Activated naive CD4-positive, alpha-beta T cell treated with anti-CD3 and anti-CD28 coated beads for 36 hours (primary cell): ENCODE measurements at regions of chr12 and their contacts with region 1.

Region 1: DNA sequence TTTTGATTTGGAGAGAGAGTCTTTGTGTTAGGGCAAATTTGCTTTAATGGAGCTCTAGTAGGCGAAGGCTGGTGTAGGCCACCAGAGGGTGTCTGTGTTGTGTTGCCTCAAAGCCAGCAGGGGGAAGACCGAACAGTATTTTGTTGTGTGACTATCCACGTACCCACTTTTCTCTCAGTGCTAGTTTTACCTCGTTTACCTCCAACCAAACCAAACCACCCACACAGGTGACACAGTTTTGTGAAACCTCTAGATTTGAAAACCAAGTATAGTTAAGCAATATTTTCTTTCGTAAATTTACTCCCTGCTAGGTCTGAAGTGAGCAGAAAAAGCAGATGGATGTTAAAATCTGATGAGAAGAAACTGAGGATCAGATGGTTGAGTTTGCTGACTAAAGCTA is 36.3 kb upstream of the NPFF start:
- DNase-seq: peak; percentile 77
- H3K4me3 Mint-ChIP-seq: no peak overlapping the region
- H3K27ac Mint-ChIP-seq: peak overlapping the region; percentile 26
- H3K4me1 Mint-ChIP-seq: peaks cover 13% of the 10 kb centered on the region
- H3K27me3 Mint-ChIP-seq: no peaks in the 10 kb centered on the region

Region 2: DNA sequence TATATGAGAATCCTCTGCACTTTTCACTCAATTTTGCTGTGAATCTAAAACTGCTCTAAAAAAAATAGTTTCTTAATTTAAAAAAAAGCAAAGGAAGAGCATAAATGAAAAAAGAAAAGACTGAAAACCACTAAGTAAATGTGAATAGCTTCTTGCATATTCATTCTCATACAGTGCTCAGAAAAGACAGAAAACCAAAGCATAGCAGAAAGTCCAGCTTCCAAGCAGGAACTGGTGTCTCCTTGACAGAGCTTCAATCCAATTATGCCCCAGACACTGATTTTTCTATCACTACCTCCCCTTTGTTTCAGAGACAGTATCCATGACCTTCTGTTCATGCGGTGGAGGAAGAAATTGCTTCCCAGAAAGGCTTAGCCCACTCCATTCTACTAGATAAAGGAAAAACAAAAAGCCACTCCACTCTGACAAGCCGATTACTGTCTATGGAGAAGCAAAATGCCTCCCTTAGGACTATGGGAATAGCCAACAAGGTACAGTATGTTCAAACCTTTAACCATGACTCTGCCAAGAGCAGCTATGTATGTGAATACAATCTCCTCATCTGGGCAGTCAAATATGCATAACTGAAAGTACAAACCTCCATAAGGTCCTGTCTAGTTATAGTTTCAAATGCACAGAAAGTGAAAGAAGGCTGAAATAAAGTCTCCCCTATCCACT is 42.0 kb after region 1 on chr12:
- CTCF ChIA-PET with region 1: interaction called, 14 read pairs
- intact Hi-C with region 1: loop called (anchors 5 kb)
- DNase-seq: no peak
- H3K4me3 Mint-ChIP-seq: no peak overlapping the region
- H3K27ac Mint-ChIP-seq: no peak overlapping the region
- H3K4me1 Mint-ChIP-seq: peaks cover 29% of the 10 kb centered on the region
- H3K27me3 Mint-ChIP-seq: no peaks in the 10 kb centered on the region

Region 3: GRCh38 chr12:53591301-53592206 is 48.0 kb after region 1 on chr12:
- CTCF ChIA-PET with region 1: interaction called, 14 read pairs
- intact Hi-C with region 1: loop called (anchors 5 kb)
- DNase-seq: no peak
- H3K4me3 Mint-ChIP-seq: no peak overlapping the region
- H3K27ac Mint-ChIP-seq: no peak overlapping the region
- H3K4me1 Mint-ChIP-seq: peaks cover 44% of the 10 kb centered on the region
- H3K27me3 Mint-ChIP-seq: no peaks in the 10 kb centered on the region

Region 4: GRCh38 chr12:53631721-53632120 is 88.2 kb after region 1 on chr12:
- CTCF ChIA-PET with region 1: interaction called, 12 read pairs
- intact Hi-C with region 1: no loop called
- DNase-seq: no peak
- H3K4me3 Mint-ChIP-seq: no peak overlapping the region
- H3K27ac Mint-ChIP-seq: no peak overlapping the region
- H3K4me1 Mint-ChIP-seq: peaks cover 6% of the 10 kb centered on the region
- H3K27me3 Mint-ChIP-seq: no peaks in the 10 kb centered on the region